Activated CD8-positive, alpha-beta T cell treated with anti-CD3 and anti-CD28 coated beads for 36 hours (primary cell): ENCODE measurements at regions of chr6 and their contacts with region 1.

Region 1: DNA sequence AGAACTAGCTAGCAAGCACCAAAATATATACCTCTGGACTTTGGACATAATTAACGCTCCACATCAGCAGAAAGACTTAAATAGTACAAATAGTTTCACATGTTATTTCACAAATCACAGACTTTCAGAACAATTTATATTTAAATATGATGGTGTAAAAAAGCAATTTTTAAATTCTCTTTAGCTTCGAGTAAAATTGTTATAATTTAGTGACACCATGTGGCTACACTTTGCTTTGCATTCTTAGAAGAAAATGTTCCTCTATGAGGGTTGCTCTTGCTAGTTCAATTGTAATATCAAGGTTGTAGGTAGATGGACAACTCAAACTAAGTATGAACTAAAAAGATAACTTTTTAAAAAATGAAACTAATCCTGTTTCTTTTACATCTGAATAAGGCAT is 69.0 kb downstream of the BTBD9 start:
- DNase-seq: no peak
- ATAC-seq: no peak
- H3K4me3 Mint-ChIP-seq: no peak overlapping the region
- H3K27ac Mint-ChIP-seq: no peak overlapping the region
- H3K4me1 Mint-ChIP-seq: peaks cover 23% of the 10 kb centered on the region
- H3K27me3 Mint-ChIP-seq: no peaks in the 10 kb centered on the region
- CTCF ChIP-seq: peak; percentile 40

Region 2: GRCh38 chr6:38593409-38593808 is 22.7 kb after region 1 on chr6:
- CTCF ChIA-PET with region 1: interaction called, 12 read pairs
- POLR2A ChIA-PET with region 1: no interaction called
- intact Hi-C with region 1: no loop called
- DNase-seq: no peak
- ATAC-seq: peak; percentile 78
- H3K4me3 Mint-ChIP-seq: no peak overlapping the region
- H3K27ac Mint-ChIP-seq: peak overlapping the region; percentile 77
- H3K4me1 Mint-ChIP-seq: peaks cover 11% of the 10 kb centered on the region
- H3K27me3 Mint-ChIP-seq: no peaks in the 10 kb centered on the region
- CTCF ChIP-seq: no peak

Region 3: DNA sequence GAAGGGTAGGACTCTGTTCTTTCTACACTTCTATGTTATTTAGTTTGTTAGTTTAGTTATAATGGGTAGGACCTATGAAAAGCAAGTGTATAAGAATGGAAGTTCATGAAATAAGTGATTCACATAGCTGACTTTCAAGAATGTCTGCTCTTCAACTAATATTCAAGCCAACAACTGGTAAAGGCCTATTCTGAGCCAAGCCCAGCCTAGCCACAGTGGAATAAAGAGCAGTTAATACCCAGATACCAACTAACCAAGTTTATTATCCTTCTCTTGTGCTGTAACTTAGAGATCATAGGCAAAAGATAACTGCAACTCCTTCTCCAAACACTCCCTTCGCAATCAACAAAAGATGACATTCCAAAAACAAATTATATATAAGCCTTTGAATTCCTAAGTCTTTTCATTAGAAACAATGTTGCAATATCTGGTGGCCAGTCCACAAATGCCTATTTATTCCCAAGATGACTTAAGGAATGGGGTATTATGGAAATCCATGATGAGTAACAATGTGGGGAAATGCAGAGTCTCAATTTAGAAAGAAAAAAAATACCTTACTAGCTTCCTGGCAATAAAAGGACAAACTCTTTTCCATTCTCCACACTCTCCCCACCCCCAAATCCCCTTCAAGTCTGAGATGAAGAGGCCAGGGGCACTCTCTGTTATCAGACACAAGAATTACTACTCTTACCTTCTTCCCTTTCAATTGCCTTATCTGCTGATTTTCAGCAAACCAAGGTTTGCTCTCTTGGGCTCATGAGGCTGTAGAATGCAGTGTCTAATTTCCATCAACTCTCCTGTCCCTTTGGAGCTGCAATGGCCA is 41.6 kb after region 1 on chr6:
- CTCF ChIA-PET with region 1: no interaction called
- POLR2A ChIA-PET with region 1: no interaction called
- intact Hi-C with region 1: no loop called
- DNase-seq: no peak
- ATAC-seq: no peak
- H3K4me3 Mint-ChIP-seq: no peak overlapping the region
- H3K27ac Mint-ChIP-seq: no peak overlapping the region
- H3K4me1 Mint-ChIP-seq: peaks cover 4% of the 10 kb centered on the region
- H3K27me3 Mint-ChIP-seq: no peaks in the 10 kb centered on the region
- CTCF ChIP-seq: no peak